Activated naive CD4-positive, alpha-beta T cell treated with anti-CD3 and anti-CD28 coated beads, Interleukin-2, amount 10 ng/mL, durations not matched to agents 7 days and 5 days (primary cell): ENCODE measurements at regions of chr1 and their contacts with region 1.

Region 1: DNA sequence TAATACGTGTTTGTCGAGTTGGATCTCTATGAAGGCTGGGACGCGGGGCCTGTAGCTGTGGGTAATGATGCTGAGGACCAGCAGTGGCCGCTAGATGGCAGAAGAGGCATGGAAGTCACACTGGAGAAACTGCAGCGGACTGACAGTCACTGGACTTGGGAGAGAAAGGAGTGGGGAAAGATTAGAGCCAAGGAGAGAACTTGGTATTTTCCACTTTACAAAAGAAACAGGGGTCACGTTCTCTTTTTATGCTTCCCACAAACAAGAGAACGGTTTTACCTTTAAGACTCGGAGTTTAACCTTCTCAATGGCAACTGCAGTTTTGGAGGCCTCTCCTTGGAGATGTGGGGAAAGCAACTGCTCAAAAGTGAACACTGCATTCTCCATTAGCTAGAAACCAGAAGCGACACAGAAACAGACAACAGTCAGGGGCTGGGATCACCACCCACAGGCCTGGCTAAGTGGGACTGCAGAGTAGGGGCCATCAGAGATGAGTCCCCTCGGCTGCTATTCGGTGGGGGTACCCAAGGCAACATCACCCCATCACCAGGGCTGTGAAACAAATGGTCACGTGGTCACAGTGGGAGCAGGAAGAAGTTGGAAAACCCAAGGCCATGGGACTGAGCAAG is 51.1 kb upstream of the EDEM3 start:
- DNase-seq: peak; percentile 88
- H3K4me3 Mint-ChIP-seq: no peak overlapping the region
- H3K27ac Mint-ChIP-seq: no peak overlapping the region
- H3K4me1 Mint-ChIP-seq: peaks cover 2% of the 10 kb centered on the region
- H3K27me3 Mint-ChIP-seq: no peaks in the 10 kb centered on the region

Region 2: DNA sequence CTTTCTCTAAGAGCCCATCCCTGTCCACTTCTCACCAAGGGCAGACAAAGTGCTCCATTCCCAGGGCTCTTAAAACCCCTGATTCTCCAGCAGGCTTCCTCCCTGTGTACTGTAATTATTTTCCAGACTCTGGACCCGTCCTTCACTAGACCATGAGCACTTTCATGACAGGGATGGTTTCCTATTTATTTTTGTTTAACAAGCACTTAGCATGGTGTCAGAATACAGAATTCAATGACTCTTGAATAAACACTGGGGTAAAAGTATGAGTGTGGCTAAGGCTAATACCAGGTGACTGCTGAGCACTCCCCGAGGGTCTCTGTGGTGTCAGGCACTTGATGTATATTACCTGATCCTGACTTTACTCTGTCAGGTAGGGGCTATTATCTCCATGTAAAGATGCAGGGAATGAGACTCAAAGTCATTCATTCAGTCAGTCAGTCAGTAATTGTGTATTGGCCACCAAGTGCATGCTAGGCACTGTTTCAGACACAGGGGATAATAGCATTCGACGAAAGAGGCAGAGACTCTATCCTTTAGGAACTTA is 371.8 kb before region 1 on chr1:
- CTCF ChIA-PET with region 1: no interaction called
- DNase-seq: no peak
- H3K4me3 Mint-ChIP-seq: no peak overlapping the region
- H3K27ac Mint-ChIP-seq: no peak overlapping the region
- H3K4me1 Mint-ChIP-seq: no peaks in the 10 kb centered on the region
- H3K27me3 Mint-ChIP-seq: no peaks in the 10 kb centered on the region

Region 3: GRCh38 chr1:184583849-184584248 is 221.9 kb before region 1 on chr1:
- CTCF ChIA-PET with region 1: no interaction called
- DNase-seq: no peak
- H3K4me3 Mint-ChIP-seq: no peak overlapping the region
- H3K27ac Mint-ChIP-seq: no peak overlapping the region
- H3K4me1 Mint-ChIP-seq: no peaks in the 10 kb centered on the region
- H3K27me3 Mint-ChIP-seq: peaks cover 3% of the 10 kb centered on the region

Region 4: GRCh38 chr1:184793967-184794366 is 11.8 kb before region 1 on chr1:
- CTCF ChIA-PET with region 1: interaction called, 18 read pairs
- DNase-seq: no peak
- H3K4me3 Mint-ChIP-seq: no peak overlapping the region
- H3K27ac Mint-ChIP-seq: no peak overlapping the region
- H3K4me1 Mint-ChIP-seq: peaks cover 10% of the 10 kb centered on the region
- H3K27me3 Mint-ChIP-seq: no peaks in the 10 kb centered on the region

Region 5: GRCh38 chr1:184838489-184838951 is 32.7 kb after region 1 on chr1:
- CTCF ChIA-PET with region 1: no interaction called
- DNase-seq: no peak
- H3K4me3 Mint-ChIP-seq: no peak overlapping the region
- H3K27ac Mint-ChIP-seq: no peak overlapping the region
- H3K4me1 Mint-ChIP-seq: peaks cover 30% of the 10 kb centered on the region
- H3K27me3 Mint-ChIP-seq: no peaks in the 10 kb centered on the region

Region 6: GRCh38 chr1:184982002-184982954 is 176.5 kb after region 1 on chr1:
- CTCF ChIA-PET with region 1: interaction called, 165 read pairs
- DNase-seq: peak; percentile 83
- H3K4me3 Mint-ChIP-seq: no peak overlapping the region
- H3K27ac Mint-ChIP-seq: no peak overlapping the region
- H3K4me1 Mint-ChIP-seq: peaks cover 7% of the 10 kb centered on the region
- H3K27me3 Mint-ChIP-seq: peaks cover 28% of the 10 kb centered on the region